WTC11 (cell line): ENCODE measurements at regions of chr1 and their contacts with region 1.

Region 1: GRCh38 chr1:145858894-145859490 is at the start of gene PIAS3:
- DNase-seq: peak; percentile 98
- ATAC-seq: peak; percentile 82
- H3K4me3 Mint-ChIP-seq: peak within 1 kb of the TSS; percentile 98
- H3K27ac Mint-ChIP-seq: peak within 1 kb of the TSS; percentile 92
- H3K4me1 Mint-ChIP-seq: peaks cover 17% of the 10 kb centered on the region
- H3K27me3 Mint-ChIP-seq: no peaks in the 10 kb centered on the region
- CTCF ChIP-seq: no peak
- total RNA-seq, gene PIAS3: 44.9 to 52.4 TPM (median 49.6 TPM) in 3 replicates

Region 2: DNA sequence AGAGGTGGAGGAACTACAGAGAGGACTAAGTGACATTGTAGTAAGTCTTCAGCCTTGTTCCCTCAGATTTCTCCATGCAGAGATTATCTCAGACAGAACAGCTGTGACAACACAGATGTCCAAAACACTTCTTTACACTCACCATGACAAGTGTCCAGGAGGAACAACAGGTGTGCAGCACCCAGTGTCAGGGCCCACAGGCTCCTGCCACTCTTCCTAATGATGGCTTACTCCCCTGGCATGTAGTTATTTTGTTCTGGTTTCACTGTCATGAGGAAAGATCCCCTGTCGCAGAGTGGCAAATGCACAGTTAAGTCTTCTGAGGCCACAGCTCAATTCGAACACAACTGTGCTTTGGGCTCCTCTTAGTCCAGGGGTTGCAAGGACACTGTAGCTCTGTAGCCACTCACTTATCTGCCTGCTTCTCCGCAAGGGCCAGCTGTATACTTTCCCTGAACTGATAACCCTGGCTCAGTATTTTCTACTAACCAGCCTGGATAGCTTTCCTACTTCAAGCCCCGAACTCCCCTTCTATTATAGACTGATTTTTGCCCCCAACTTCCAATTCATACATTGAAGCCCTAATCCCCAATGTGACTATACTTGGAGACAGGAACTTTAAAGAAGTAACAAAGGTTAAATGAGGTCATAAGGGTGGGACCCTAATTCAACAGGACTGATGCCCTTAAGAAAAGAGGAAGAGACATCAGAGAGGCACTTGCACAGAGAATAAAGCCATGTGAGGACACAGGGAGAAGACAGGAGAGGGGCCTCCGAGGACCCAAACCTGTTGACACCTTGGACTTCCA is 163.0 kb before region 1 on chr1:
- CTCF ChIA-PET with region 1: no interaction called
- POLR2A ChIA-PET with region 1: no interaction called
- DNase-seq: no peak
- ATAC-seq: no peak
- H3K4me3 Mint-ChIP-seq: no peak overlapping the region
- H3K27ac Mint-ChIP-seq: no peak overlapping the region
- H3K4me1 Mint-ChIP-seq: no peaks in the 10 kb centered on the region
- H3K27me3 Mint-ChIP-seq: peaks cover 12% of the 10 kb centered on the region
- CTCF ChIP-seq: no peak

Region 3: GRCh38 chr1:145823565-145824498 is 35.2 kb before region 1 on chr1 and contains the starts of genes POLR3C and RNF115:
- CTCF ChIA-PET with region 1: interaction called, 5 read pairs
- POLR2A ChIA-PET with region 1: interaction called, 10 read pairs
- DNase-seq: peak; percentile 92
- ATAC-seq: peak; percentile 95
- H3K4me3 Mint-ChIP-seq: peak within 1 kb of the TSS; percentile 93
- H3K27ac Mint-ChIP-seq: peak within 1 kb of the TSS; percentile 99
- H3K4me1 Mint-ChIP-seq: peaks cover 5% of the 10 kb centered on the region
- H3K27me3 Mint-ChIP-seq: no peaks in the 10 kb centered on the region
- CTCF ChIP-seq: no peak
- total RNA-seq, gene POLR3C: 20.2 to 24.9 TPM (median 22.7 TPM) in 3 replicates
- total RNA-seq, gene RNF115: 8.1 to 9.2 TPM (median 9.0 TPM) in 3 replicates

Region 4: DNA sequence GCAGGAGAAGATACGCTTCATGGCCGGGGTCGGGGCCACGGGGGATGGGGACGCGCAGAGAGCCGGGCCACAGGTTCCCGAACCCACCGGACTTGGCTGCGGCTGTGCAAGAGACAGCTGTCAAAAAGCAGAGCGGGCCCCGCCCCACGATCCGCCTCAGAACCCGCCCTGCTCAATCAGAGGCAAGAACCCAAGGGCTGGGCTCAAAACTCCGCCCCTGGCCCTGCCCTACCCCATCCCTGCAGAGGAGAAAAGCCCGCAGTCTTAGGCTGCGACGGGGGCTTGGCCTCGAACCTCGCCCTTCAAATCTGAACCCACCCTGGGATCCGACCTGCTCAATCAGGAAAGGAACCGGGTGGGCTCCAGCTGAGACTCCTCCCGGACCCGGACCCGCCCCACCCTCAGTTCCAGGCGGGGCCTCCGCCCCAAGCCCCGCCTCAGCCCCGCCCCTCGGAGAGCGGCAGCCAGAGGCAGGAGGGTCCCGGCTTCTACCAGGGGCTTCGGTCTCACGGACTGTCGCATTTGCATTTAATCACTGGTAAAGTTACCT is 26.8 kb after region 1 on chr1 and contains the start of gene ANKRD35:
- CTCF ChIA-PET with region 1: interaction called, 65 read pairs
- POLR2A ChIA-PET with region 1: interaction called, 14 read pairs
- DNase-seq: peak; percentile 93
- ATAC-seq: peak; percentile 97
- H3K4me3 Mint-ChIP-seq: peak within 1 kb of the TSS; percentile 79
- H3K27ac Mint-ChIP-seq: no peak within 1 kb of the TSS
- H3K4me1 Mint-ChIP-seq: peaks cover 15% of the 10 kb centered on the region
- H3K27me3 Mint-ChIP-seq: peaks cover 35% of the 10 kb centered on the region
- CTCF ChIP-seq: no peak
- total RNA-seq, gene ANKRD35: 2.7 to 3.2 TPM (median 2.9 TPM) in 3 replicates

Region 5: GRCh38 chr1:145906954-145907753 is 48.2 kb after region 1 on chr1:
- CTCF ChIA-PET with region 1: interaction called, 32 read pairs
- POLR2A ChIA-PET with region 1: interaction called, 3 read pairs
- DNase-seq: no peak
- ATAC-seq: peak; percentile 25; the same call in 1 of the 2 replicates
- H3K4me3 Mint-ChIP-seq: no peak overlapping the region
- H3K27ac Mint-ChIP-seq: no peak overlapping the region
- H3K4me1 Mint-ChIP-seq: peaks cover 14% of the 10 kb centered on the region
- H3K27me3 Mint-ChIP-seq: peaks cover 3% of the 10 kb centered on the region
- CTCF ChIP-seq: no peak

Region 6: GRCh38 chr1:145963995-145964901 is 105.3 kb after region 1 on chr1 and contains the starts of genes ANKRD34A and POLR3GL:
- CTCF ChIA-PET with region 1: interaction called, 12 read pairs
- POLR2A ChIA-PET with region 1: interaction called, 5 read pairs
- DNase-seq: peak; percentile 96
- ATAC-seq: peak; percentile 85
- H3K4me3 Mint-ChIP-seq: peak within 1 kb of the TSS; percentile 91
- H3K27ac Mint-ChIP-seq: peak within 1 kb of the TSS; percentile 68; the same call in 1 of the 2 replicates
- H3K4me1 Mint-ChIP-seq: peaks cover 38% of the 10 kb centered on the region
- H3K27me3 Mint-ChIP-seq: peaks cover 70% of the 10 kb centered on the region
- CTCF ChIP-seq: no peak
- total RNA-seq, gene ANKRD34A: 0.21 to 0.44 TPM (median 0.22 TPM) in 3 replicates
- total RNA-seq, gene POLR3GL: 3.8 to 8.3 TPM (median 6.7 TPM) in 3 replicates

Region 7: GRCh38 chr1:146049436-146049835 is 190.4 kb after region 1 on chr1:
- CTCF ChIA-PET with region 1: interaction called, 6 read pairs
- POLR2A ChIA-PET with region 1: interaction called, 15 read pairs
- DNase-seq: peak; percentile 38
- ATAC-seq: no peak
- H3K4me3 Mint-ChIP-seq: no peak overlapping the region
- H3K27ac Mint-ChIP-seq: peak overlapping the region; percentile 70; the same call in 1 of the 2 replicates
- H3K4me1 Mint-ChIP-seq: peaks cover 14% of the 10 kb centered on the region
- H3K27me3 Mint-ChIP-seq: no peaks in the 10 kb centered on the region
- CTCF ChIP-seq: no peak